ENCODE measurements at regions of chr19 and their contacts with region 1.

Region 1: GRCh38 chr19:40633207-40633606 is 32.0 kb downstream of the LTBP4 start:
- DNase-seq: no peak
- ATAC-seq: 0 out of 6 replicates have a peak, but pooled peaks of 1 of the 2 experiments have one; percentile 21
- H3K4me3 ChIP-seq: no peak overlapping the region
- H3K27ac ChIP-seq: no peak overlapping the region
- H3K4me1 ChIP-seq: peaks cover 7% of the 10 kb centered on the region
- CTCF ChIP-seq: no peak
- EP300 ChIP-seq: no peak
- POLR2A ChIP-seq: no peak
- RAD21 ChIP-seq: no peak

Region 2: DNA sequence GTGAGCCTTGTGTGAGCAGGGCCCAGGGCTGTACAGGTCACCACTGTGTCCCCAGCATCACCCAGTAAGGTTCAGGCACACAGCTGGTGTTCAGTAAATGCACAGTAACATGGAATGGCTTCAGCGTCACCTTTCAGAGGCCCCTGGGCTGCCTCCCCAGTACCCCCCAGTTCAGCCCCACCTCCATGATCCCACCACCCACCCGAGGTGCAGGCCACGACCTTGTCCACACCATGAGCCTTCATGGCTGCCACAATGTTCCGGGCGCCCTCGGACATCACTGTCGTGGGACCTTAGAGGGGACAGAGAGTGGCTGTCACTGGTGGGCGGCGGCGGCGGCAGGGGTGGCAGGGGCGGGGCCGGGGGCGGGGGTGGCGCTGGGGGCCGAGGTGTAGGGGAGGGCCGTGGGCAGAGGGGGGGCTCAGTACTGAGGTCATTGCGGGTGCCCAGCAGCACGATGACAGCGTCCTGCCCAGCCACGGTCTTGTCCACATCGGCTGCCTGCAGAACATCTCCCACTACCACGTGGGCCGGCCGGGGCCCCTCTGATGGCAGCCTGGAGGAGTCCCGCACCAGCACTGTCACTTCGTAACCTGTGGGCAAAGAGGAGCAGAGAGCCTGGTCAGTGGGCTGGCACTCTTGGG is 175.1 kb before region 1 on chr19:
- CTCF ChIA-PET with region 1: interaction called, 51 read pairs
- POLR2A ChIA-PET with region 1: no interaction called
- DNase-seq: no peak
- ATAC-seq: no peak
- H3K4me3 ChIP-seq: no peak overlapping the region
- H3K27ac ChIP-seq: no peak overlapping the region
- H3K4me1 ChIP-seq: peaks cover 11% of the 10 kb centered on the region
- CTCF ChIP-seq: no peak
- EP300 ChIP-seq: no peak
- POLR2A ChIP-seq: no peak
- RAD21 ChIP-seq: no peak

Region 3: GRCh38 chr19:40529093-40529954 is 103.9 kb before region 1 on chr19:
- CTCF ChIA-PET with region 1: interaction called, 30 read pairs
- POLR2A ChIA-PET with region 1: interaction called, 3 read pairs
- DNase-seq: peak; percentile 94 to 100
- ATAC-seq: peak; percentile 37 to 78
- H3K4me3 ChIP-seq: peak overlapping the region; percentile 50
- H3K27ac ChIP-seq: peak overlapping the region; percentile 55 to 79
- H3K4me1 ChIP-seq: peaks cover 18% of the 10 kb centered on the region
- CTCF ChIP-seq: peak; percentile 99
- EP300 ChIP-seq: 0 out of 5 replicates have a peak, but pooled peaks of 1 of the 2 experiments have one; percentile 17
- POLR2A ChIP-seq: no peak
- RAD21 ChIP-seq: peak; percentile 43 to 72; a peak in 4 of 5 replicates

Region 4: DNA sequence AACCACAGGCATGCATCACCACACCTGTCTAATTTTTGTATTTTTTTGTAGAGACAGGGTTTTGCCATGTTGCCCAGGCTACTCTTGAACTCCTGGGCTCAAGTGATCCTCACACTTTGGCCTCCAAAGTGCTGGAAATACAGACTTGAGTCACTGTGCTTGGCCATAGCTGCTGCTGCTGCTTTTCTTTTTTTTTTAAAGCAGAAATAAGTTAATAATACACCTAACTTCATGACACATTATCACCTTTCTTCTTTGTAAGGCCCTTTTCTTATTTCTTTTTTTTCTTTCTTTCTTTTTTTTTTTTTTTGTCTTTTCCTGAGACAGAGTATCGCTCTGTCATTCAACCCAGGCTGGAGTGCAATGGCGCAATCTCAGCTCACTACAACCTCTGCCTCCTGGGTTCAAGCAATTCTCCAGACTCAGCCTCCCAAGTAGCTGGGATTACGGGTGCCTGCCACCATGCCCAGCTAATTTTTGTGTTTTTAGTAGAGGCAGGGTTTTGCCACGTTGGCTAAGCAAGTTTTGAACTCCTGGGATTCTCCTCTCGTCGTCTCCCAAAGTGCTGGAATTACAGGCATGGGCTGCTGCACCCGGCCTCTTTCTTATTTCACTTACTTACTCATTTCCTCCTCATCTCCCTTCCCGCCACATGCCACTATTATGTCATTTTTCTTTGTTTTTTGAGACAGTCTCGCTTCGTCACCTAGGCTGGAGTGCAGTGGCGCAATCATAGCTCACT is 47.8 kb before region 1 on chr19:
- CTCF ChIA-PET with region 1: interaction called, 31 read pairs
- POLR2A ChIA-PET with region 1: no interaction called
- DNase-seq: peak; percentile 69 to 97
- ATAC-seq: peak; percentile 60 to 74
- H3K4me3 ChIP-seq: no peak overlapping the region
- H3K27ac ChIP-seq: peak overlapping the region; percentile 70 to 84
- H3K4me1 ChIP-seq: peaks cover 47% of the 10 kb centered on the region
- CTCF ChIP-seq: no peak
- EP300 ChIP-seq: peak; percentile 65 to 68; a peak in 3 of 5 replicates
- POLR2A ChIP-seq: no peak
- RAD21 ChIP-seq: peak in 1 of 2 experiments; percentile 21; a peak in 1 of 5 replicates

Region 5: DNA sequence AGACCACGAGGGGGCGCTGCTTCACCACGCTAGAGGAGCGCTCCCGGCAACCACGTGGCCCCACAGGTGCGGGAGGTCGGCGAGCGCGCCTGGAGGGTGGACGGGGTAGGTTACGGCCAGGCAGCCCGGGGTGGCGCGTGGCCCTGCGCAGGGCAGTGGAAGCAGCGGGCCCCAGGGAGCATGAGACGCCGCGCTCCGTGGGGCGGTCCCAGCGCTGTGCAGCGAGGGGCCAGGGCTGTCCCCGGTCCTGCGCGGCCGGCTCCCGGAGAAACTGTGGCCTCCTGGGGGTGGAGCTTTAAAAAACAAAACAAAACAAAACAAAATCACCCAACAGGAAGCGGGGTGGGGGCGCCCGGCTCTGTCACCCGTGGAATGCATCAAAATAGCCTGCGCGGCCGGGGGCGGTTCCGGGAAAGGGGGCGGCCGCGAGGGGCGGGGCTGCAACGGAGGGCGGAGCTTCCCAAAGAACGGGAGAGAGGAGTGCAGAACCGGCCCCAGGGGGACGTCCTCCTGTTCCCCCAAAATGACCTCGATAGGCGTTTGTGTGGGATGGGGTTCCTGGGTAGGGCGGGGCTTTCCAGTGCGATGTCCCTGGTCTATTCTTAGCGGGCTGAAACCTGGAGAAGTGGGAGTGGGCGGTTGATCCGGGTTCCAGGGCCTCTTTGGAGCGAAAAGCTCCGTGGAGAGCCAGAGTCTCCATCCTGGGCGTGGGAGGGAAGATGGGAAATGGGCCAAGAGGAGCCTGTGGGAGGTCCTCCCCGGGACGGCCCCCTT is 29.9 kb after region 1 on chr19:
- CTCF ChIA-PET with region 1: interaction called, 174 read pairs
- POLR2A ChIA-PET with region 1: no interaction called
- DNase-seq: peak; percentile 95 to 97
- ATAC-seq: peak; percentile 79 to 87
- H3K4me3 ChIP-seq: peak overlapping the region; percentile 57
- H3K27ac ChIP-seq: peak overlapping the region; percentile 81 to 83
- H3K4me1 ChIP-seq: peaks cover 39% of the 10 kb centered on the region
- CTCF ChIP-seq: peak; percentile 100
- EP300 ChIP-seq: no peak
- POLR2A ChIP-seq: peak; percentile 50
- RAD21 ChIP-seq: peak; percentile 100

Region 6: DNA sequence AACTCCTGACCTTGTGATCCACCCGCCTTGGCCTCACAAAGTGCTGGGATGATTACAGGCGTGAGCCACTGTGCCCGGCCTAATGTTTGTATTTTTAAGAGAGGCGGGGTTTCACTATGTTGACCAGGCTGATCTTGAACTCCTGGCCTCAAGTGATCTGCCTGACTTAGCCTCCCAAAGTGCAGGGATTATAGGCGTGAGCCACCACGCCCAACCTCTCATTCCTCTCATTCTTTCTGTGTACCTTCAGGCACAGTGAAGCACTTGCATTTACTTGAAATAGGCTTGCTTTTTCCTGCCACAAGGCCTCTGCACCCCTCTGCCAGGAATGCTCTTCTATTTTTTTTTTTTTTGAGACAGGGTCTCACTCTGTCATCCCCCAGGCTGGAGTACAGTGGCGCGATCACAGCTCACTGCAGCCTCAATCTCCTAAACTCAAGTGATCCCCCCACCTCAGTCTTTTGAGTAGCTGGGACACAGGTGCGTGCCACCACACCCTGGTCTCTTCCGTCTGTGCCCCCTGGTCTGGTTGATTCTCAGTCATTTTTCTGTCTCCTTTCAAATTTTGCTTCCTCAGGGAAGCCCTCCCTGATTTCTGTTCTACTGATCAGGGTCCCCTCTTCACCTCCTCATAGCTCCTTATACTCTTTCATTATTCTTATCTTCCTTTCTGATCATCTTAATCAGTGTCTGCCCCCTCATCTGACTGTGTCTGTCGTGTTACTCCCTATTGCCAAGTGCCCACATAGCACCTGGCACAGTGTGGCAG is 102.0 kb after region 1 on chr19:
- CTCF ChIA-PET with region 1: interaction called, 10 read pairs
- POLR2A ChIA-PET with region 1: no interaction called
- DNase-seq: peak in 1 of 2 experiments; percentile 57
- ATAC-seq: no peak
- H3K4me3 ChIP-seq: no peak overlapping the region
- H3K27ac ChIP-seq: no peak overlapping the region
- H3K4me1 ChIP-seq: no peaks in the 10 kb centered on the region
- CTCF ChIP-seq: no peak
- EP300 ChIP-seq: no peak
- POLR2A ChIP-seq: no peak
- RAD21 ChIP-seq: no peak

Region 7: GRCh38 chr19:41016488-41017071 is 383.4 kb after region 1 on chr19:
- CTCF ChIA-PET with region 1: no interaction called
- POLR2A ChIA-PET with region 1: no interaction called
- DNase-seq: no peak
- ATAC-seq: no peak
- H3K4me3 ChIP-seq: no peak overlapping the region
- H3K27ac ChIP-seq: no peak overlapping the region
- H3K4me1 ChIP-seq: no peaks in the 10 kb centered on the region
- CTCF ChIP-seq: no peak
- EP300 ChIP-seq: no peak
- POLR2A ChIP-seq: no peak
- RAD21 ChIP-seq: no peak

Measured in A549 (cell line).